Posterior cingulate gyrus (tissue), 11 donors: ENCODE measurements at regions of chr11 and their contacts with region 1.

Region 1: DNA sequence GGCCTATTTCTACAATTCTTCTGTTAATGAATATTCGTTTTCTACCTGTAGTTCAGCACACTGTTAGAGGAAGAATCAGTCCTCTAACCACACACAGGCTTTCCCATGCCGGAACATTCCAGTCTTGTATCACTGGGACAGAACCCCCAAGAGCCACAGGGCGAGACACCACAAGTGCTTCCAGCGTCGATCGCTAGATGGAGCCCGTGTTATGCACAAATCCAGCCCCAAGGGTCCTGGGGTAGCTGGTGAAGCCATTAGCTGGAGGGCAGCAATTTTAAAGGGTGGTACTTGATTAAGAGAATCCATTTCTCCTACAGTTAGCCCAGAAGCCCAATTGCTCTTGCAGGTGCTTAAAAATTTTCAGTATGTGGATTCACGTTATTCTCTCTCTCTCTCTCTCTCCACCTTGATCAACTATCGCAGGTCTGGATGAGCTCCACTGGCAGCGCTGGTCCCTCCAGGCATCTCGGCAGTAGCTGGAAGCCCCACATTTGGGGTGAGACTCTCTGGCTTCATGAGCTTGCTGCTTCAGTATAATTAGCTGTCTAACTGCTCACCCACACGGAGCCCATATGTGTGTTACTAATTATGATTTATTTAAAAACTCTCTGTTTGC is 148.2 kb upstream of the SNX19 start:
- DNase-seq: peak; percentile 41 to 95 (median 69)

Region 2: GRCh38 chr11:131217313-131218310 is 153.1 kb after region 1 on chr11:
- intact Hi-C with region 1: loop called (anchors 10 kb)
- DNase-seq: peak in 1 of 10 donors; percentile 26

Region 3: GRCh38 chr11:131246663-131247062 is 182.2 kb after region 1 on chr11:
- intact Hi-C with region 1: loop called (anchors 10 kb)
- DNase-seq: peak; percentile 31 to 96 (median 78)

Region 4: GRCh38 chr11:131504199-131504949 is 439.9 kb after region 1 on chr11:
- intact Hi-C with region 1: loop called (anchors 5 kb)
- DNase-seq: peak; percentile 66 to 96 (median 74)